B cell (primary cell): ENCODE measurements at regions of chr3 and their contacts with region 1.

Region 1: GRCh38 chr3:123584988-123585937 is at the start of gene HACD2:
- DNase-seq: peak; percentile 96
- ATAC-seq: peak; percentile 94
- H3K4me3 ChIP-seq: peak within 1 kb of the TSS; percentile 78 to 99 (median 86)
- H3K4me3 Mint-ChIP-seq: no peak within 1 kb of the TSS
- H3K27ac ChIP-seq: peak within 1 kb of the TSS; percentile 79 to 87
- H3K27ac Mint-ChIP-seq: peak within 1 kb of the TSS; percentile 85
- H3K4me1 ChIP-seq: peaks cover 23 to 25% of the 10 kb centered on the region in 2 donors
- H3K4me1 Mint-ChIP-seq: peaks cover 25% of the 10 kb centered on the region
- H3K27me3 ChIP-seq: no peaks in the 10 kb centered on the region
- H3K27me3 Mint-ChIP-seq: no peaks in the 10 kb centered on the region
- CTCF ChIP-seq: no peak
- total RNA-seq, gene HACD2: 30.7 and 31.1 TPM in 2 replicates

Region 2: DNA sequence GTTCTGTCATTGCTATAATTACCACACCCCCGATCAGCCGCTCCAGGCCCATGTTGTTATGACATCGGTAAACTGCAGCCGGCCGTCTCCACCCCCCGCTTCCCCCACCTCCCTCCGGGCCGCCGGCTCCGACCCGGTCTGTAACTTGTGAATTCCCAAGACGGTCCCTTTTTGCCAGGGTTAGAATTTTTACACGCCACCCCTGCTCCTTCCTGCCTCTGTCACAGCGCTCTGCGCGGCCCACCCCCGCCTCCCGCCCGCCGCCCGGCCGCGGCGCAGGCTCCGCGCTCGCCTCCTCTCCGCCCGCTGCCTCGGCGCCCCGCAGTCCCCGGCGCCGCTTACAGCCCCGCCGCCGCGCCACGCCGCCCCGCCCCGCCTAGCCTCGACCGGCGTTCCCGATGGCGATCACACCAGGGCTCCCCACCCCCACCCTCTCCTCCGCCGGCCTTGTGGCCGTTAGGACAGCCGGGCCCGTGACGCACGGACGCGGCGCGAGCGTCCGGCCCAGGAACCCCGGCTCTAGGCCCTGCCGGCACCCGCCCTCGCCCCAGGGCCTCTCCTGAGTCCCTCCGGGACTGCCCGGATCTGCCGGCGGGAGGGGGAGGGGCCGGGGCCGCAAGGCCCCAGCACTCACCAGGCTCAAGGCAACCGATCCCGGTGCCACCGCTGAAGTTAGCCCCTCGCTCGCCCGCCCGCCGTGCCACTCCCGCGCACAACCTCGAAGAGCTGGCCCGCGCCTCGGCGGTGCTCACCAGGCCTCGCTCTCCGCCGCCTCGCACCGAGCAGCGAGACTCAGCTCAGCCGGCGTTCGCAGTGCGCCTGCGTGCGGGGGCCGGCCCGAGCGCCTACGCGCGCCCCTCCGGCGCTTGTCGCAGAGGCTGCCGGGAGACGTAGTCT is 1070.9 kb before region 1 on chr3 and contains the start of gene KPNA1:
- CTCF ChIA-PET with region 1: no interaction called
- POLR2A ChIA-PET with region 1: no interaction called
- intact Hi-C with region 1: loop called (anchors 2 kb)
- DNase-seq: peak; percentile 94
- ATAC-seq: peak; percentile 79
- H3K4me3 ChIP-seq: peak within 1 kb of the TSS; percentile 64 to 90 (median 85)
- H3K4me3 Mint-ChIP-seq: peak within 1 kb of the TSS; percentile 81
- H3K27ac ChIP-seq: peak within 1 kb of the TSS; percentile 92 to 99
- H3K27ac Mint-ChIP-seq: peak within 1 kb of the TSS; percentile 96
- H3K4me1 ChIP-seq: peaks cover 11 to 15% of the 10 kb centered on the region in 2 donors
- H3K4me1 Mint-ChIP-seq: peaks cover 34% of the 10 kb centered on the region
- H3K27me3 ChIP-seq: no peaks in the 10 kb centered on the region
- H3K27me3 Mint-ChIP-seq: no peaks in the 10 kb centered on the region
- CTCF ChIP-seq: no peak
- total RNA-seq, gene KPNA1: 79.4 and 85.9 TPM in 2 replicates

Region 3: DNA sequence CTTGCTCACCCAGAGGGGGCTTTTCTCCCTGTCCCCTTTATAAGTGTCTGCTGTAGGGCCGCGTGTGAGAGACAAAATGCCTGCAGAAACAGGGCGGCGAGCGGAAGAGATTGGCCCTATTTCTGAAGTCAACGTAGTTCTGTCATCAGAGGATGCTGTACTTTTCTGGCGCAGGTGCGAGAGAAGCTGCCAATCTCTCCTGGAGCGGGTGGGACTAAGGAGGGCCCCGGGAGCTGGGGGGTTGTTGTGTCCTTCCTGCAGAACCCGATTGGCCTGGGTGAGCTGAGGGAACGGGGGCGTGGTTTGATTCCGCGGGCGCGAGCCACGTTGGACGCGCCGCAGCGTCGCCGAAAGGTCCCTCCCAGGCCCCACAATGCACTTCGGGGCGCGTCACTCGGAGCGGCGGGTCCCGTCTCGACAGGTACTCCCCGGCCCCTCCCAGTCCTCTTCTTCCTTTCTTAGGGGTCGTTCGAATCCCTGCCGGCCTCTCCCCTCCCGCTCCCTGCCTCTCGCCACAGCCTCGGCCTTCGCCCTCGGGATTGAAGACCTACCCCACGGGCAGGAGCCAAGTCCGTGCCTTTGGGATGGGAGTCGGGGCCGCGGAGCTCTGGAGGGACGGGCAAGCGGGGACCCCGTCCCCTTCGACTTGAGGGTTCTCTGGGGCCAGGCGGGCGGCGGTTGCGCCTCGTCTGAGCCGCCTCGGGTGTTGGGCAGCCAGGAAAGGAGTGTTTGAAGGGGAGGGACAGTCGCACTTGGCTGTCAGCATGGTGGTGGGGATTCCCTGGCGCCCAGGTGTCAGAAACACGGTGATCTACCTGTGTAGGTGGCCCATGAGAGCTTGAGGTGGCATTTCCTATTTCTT is 383.5 kb before region 1 on chr3 and contains the start of gene SEC22A:
- CTCF ChIA-PET with region 1: no interaction called
- POLR2A ChIA-PET with region 1: no interaction called
- intact Hi-C with region 1: loop called (anchors 1 kb)
- DNase-seq: peak; percentile 95
- ATAC-seq: peak; percentile 96
- H3K4me3 ChIP-seq: peak within 1 kb of the TSS; percentile 86 to 99 (median 90)
- H3K4me3 Mint-ChIP-seq: peak within 1 kb of the TSS; percentile 95
- H3K27ac ChIP-seq: peak within 1 kb of the TSS; percentile 92 to 96
- H3K27ac Mint-ChIP-seq: peak within 1 kb of the TSS; percentile 94
- H3K4me1 ChIP-seq: peaks cover 13 to 18% of the 10 kb centered on the region in 2 donors
- H3K4me1 Mint-ChIP-seq: peaks cover 22% of the 10 kb centered on the region
- H3K27me3 ChIP-seq: no peaks in the 10 kb centered on the region
- H3K27me3 Mint-ChIP-seq: no peaks in the 10 kb centered on the region
- CTCF ChIP-seq: no peak
- total RNA-seq, gene SEC22A: 16.1 and 19.3 TPM in 2 replicates

Region 4: DNA sequence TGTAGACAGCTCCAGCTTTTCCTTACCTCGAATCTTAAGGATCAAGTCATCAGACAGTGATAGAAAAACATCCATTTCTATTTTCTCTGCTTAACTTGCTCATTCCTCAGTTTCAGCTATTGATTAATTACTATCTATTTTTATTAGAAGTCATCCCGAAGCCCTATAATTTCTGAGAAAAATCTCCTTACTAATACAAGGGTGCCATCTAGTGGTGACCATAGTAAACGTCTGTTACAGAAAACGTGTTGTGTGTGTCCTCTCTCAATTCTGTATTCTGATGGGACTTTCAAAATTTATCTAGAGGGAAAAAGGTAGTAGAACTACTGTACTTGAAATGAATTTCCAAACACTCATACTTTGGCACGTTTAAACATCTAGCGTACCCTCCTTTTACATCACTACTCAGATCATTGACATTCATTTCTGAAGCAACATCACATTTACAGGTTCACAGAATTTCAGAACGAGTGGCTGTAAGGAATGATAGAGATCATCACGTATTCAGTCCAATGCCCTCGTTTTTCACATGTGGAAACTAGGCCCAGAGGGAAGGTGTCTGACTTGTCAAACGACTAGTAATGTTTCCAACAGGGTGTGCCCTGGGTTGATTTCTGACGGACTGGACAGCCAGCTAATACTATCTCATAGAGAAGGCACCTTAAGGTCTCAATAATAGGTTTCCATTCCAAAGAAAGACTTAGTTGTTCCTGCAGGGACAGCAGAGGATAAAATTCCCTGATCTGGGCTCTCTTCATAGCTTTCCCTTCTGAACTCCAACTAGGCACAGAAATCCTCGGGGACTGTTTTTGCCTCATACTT is 26.0 kb before region 1 on chr3:
- CTCF ChIA-PET with region 1: interaction called, 10 read pairs
- POLR2A ChIA-PET with region 1: no interaction called
- intact Hi-C with region 1: no loop called
- DNase-seq: peak; percentile 68
- ATAC-seq: peak; percentile 51
- H3K4me3 ChIP-seq: no peak overlapping the region
- H3K4me3 Mint-ChIP-seq: no peak overlapping the region
- H3K27ac ChIP-seq: no peak overlapping the region
- H3K27ac Mint-ChIP-seq: no peak overlapping the region
- H3K4me1 ChIP-seq: no peaks in the 10 kb centered on the region
- H3K4me1 Mint-ChIP-seq: no peaks in the 10 kb centered on the region
- H3K27me3 ChIP-seq: no peaks in the 10 kb centered on the region
- H3K27me3 Mint-ChIP-seq: no peaks in the 10 kb centered on the region
- CTCF ChIP-seq: peak; percentile 94

Region 5: DNA sequence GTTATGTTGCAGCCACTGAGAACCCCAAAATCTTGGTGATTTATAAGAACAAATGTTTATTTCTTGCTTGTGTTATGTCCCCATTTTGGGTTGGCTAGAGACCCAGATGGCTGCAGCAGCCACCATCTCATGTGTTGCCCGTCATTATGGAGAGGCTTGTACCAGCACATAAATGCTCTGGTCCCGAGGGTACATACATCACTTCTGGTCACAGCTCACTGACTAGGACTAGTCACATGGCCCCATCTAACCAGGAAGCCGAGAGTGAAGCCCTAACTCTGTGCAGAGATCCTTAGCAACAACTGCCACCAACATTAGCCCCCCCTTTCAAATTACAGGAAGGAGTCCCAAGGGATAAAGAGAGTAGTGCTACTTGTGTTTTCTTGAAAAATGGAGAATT is 25.1 kb after region 1 on chr3:
- CTCF ChIA-PET with region 1: no interaction called
- POLR2A ChIA-PET with region 1: interaction called, 4 read pairs
- intact Hi-C with region 1: loop called (anchors 1 kb)
- DNase-seq: peak; percentile 75
- ATAC-seq: peak; percentile 97
- H3K4me3 ChIP-seq: peak overlapping the region in 1 of 5 experiments; percentile 53
- H3K4me3 Mint-ChIP-seq: peak overlapping the region; percentile 51
- H3K27ac ChIP-seq: peak overlapping the region in 1 of 2 donors; percentile 44
- H3K27ac Mint-ChIP-seq: peak overlapping the region; percentile 76
- H3K4me1 ChIP-seq: peaks cover 11 to 12% of the 10 kb centered on the region in 2 donors
- H3K4me1 Mint-ChIP-seq: peaks cover 22% of the 10 kb centered on the region
- H3K27me3 ChIP-seq: no peaks in the 10 kb centered on the region
- H3K27me3 Mint-ChIP-seq: no peaks in the 10 kb centered on the region
- CTCF ChIP-seq: no peak

Region 6: DNA sequence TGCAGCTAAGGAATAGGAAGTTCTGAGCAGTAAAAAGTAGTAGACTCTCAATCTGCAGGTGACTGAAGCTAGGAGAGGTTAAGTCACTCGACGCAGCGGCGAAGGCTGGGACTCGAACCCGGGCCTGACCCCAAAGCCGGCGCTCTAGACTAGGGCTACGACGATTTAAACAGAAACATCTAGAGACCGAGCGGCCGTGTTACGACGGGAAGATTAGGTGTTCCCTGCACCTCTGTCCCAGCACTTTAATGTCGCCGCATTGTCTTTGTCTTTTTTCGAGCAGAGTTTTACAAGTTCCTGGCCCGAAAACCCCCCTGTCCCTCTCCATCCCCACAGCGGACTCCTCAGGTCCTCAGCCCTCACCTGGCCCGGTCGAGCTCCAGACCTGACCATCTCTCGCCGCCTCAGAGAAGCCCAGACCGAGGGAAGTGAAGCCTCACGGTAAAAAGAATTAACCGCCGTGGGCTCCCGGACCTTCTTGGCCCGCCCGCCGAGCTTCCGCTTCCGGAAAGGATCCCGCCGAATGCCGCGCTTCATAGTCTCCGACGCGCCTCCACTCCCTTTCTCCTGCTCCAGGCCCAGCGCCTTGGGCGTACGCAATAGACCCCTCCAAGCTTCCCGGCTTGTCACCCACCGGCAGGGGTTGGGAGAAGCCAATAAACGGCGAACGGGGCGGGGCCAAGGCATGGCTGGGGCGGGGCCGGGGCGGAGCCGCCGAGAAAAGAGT is 375.7 kb after region 1 on chr3 and contains the start of gene CCDC14:
- CTCF ChIA-PET with region 1: no interaction called
- POLR2A ChIA-PET with region 1: no interaction called
- intact Hi-C with region 1: loop called (anchors 5 kb)
- DNase-seq: peak; percentile 79
- ATAC-seq: peak; percentile 89
- H3K4me3 ChIP-seq: peak within 1 kb of the TSS; percentile 63 to 93 (median 76)
- H3K4me3 Mint-ChIP-seq: peak within 1 kb of the TSS; percentile 97
- H3K27ac ChIP-seq: peak within 1 kb of the TSS; percentile 73 to 78
- H3K27ac Mint-ChIP-seq: peak within 1 kb of the TSS; percentile 93
- H3K4me1 ChIP-seq: peaks cover 0 to 10% of the 10 kb centered on the region in 2 donors
- H3K4me1 Mint-ChIP-seq: peaks cover 25% of the 10 kb centered on the region
- H3K27me3 ChIP-seq: peaks cover 0 to 3% (median 0%) of the 10 kb centered on the region in 4 experiments
- H3K27me3 Mint-ChIP-seq: peaks cover 8% of the 10 kb centered on the region
- CTCF ChIP-seq: no peak
- total RNA-seq, gene CCDC14: 35.3 and 44.2 TPM in 2 replicates

Region 7: GRCh38 chr3:124730129-124730940 is 1145.1 kb after region 1 on chr3 and contains the start of gene UMPS:
- CTCF ChIA-PET with region 1: no interaction called
- POLR2A ChIA-PET with region 1: no interaction called
- intact Hi-C with region 1: loop called (anchors 5 kb)
- DNase-seq: peak; percentile 94
- ATAC-seq: peak; percentile 97
- H3K4me3 ChIP-seq: peak within 1 kb of the TSS; percentile 86 to 99 (median 88)
- H3K4me3 Mint-ChIP-seq: peak within 1 kb of the TSS; percentile 99
- H3K27ac ChIP-seq: peak within 1 kb of the TSS; percentile 46 to 78
- H3K27ac Mint-ChIP-seq: peak within 1 kb of the TSS; percentile 94
- H3K4me1 ChIP-seq: peaks cover 10 to 14% of the 10 kb centered on the region in 2 donors
- H3K4me1 Mint-ChIP-seq: peaks cover 28% of the 10 kb centered on the region
- H3K27me3 ChIP-seq: peaks cover 0 to 10% (median 4%) of the 10 kb centered on the region in 4 experiments
- H3K27me3 Mint-ChIP-seq: peaks cover 20% of the 10 kb centered on the region
- CTCF ChIP-seq: no peak
- total RNA-seq, gene UMPS: 21.4 and 25.1 TPM in 2 replicates